ENCODE measurements at regions of chr7 and their contacts with region 1.

Region 1: DNA sequence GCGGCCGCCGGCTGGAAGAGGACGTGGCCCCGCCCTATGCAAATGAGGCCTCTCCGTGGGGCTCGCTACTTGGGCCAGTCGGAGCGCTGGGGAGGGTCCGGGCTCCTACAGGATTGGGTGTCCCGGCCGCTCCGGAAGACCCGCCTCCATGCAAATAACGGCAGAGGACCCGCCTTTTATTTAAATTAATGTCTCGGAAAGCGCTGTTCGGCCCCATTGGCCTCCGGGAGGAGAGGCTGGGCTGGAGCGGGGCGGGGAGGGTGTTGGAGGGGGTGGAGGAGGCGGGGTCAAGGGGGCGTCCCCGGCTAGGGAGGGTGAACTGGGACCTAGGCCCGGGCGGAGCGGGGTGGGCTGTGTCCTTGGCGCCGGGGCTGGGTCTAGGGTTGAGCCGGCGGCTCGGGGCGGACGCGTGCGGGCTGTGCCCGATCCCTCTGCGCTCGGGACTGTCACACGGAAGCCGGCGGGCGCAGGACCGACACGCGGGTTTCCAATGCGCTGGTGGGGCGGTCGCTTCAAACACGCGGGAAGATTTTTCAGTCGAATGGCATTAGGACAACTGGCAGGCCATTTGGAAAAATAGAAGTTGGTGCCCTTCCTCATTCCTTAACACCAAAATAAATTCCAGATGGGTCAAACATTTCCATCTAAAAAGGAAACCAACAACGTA is 344 bp upstream of the POLM start:
- DNase-seq: peak; percentile 93
- ATAC-seq: peak; percentile 90
- H3K4me3 Mint-ChIP-seq: peak overlapping the region; percentile 83
- H3K27ac Mint-ChIP-seq: peak overlapping the region; percentile 80
- H3K4me1 Mint-ChIP-seq: peaks cover 47% of the 10 kb centered on the region
- H3K27me3 Mint-ChIP-seq: no peaks in the 10 kb centered on the region
- CTCF ChIP-seq: no peak

Region 2: GRCh38 chr7:43925984-43926797 is 156.5 kb before region 1 on chr7 and contains the start of gene UBE2D4:
- CTCF ChIA-PET with region 1: no interaction called
- POLR2A ChIA-PET with region 1: no interaction called
- intact Hi-C with region 1: loop called (anchors 1 kb)
- DNase-seq: peak; percentile 89
- ATAC-seq: peak; percentile 88
- H3K4me3 Mint-ChIP-seq: peak within 1 kb of the TSS; percentile 87
- H3K27ac Mint-ChIP-seq: peak within 1 kb of the TSS; percentile 93
- H3K4me1 Mint-ChIP-seq: peaks cover 24% of the 10 kb centered on the region
- H3K27me3 Mint-ChIP-seq: no peaks in the 10 kb centered on the region
- CTCF ChIP-seq: no peak
- total RNA-seq, gene UBE2D4: 18.9 and 19.6 TPM in 2 replicates

Region 3: DNA sequence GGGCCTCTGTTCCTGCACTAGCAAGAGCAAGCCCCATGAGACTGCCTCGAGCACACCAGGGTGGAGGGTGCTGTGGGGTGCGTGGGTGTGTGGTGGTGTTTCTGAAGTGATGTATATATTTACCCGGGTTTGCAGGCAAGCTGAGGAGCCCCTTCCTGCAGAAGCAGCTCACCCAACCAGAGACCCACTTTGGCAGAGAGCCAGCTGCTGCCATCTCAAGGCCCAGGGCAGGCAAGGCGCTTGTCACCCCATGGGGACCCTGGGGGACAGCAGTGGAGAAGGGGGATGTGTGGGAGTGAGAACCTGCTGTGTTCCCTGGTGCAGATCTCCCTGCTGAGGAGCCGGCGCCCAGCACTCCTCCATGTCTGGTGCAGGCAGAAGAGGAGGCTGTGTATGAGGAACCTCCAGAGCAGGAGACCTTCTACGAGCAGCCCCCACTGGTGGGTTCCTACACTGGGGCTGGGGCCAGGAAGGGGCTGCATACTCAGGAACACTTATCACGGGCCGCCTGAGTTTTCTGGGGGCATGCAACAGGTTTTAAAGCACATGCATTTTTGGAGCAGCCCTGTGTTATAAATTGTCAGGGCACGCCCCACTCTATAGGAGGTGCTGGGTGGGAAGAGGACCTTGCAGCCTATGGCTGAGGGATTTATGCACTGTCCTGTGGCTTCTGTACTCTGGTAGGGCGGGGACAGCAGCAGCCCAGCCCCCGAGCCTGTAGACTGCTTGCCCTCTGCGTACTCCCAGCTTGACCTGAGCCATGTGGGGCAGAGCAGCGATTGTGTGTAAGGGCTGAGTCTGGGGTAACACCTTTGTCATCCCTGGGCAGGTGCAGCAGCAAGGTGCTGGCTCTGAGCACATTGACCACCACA is 23.2 kb before region 1 on chr7:
- CTCF ChIA-PET with region 1: no interaction called
- POLR2A ChIA-PET with region 1: interaction called, 9 read pairs
- intact Hi-C with region 1: loop called (anchors 1 kb)
- DNase-seq: peak; percentile 57
- ATAC-seq: peak; percentile 89
- H3K4me3 Mint-ChIP-seq: peak overlapping the region; percentile 82
- H3K27ac Mint-ChIP-seq: peak overlapping the region; percentile 98
- H3K4me1 Mint-ChIP-seq: peaks cover 74% of the 10 kb centered on the region
- H3K27me3 Mint-ChIP-seq: no peaks in the 10 kb centered on the region
- CTCF ChIP-seq: no peak

Region 4: GRCh38 chr7:44072364-44073231 is 10.1 kb before region 1 on chr7:
- CTCF ChIA-PET with region 1: interaction called, 5 read pairs
- POLR2A ChIA-PET with region 1: interaction called, 12 read pairs
- intact Hi-C with region 1: loop called (anchors 1 kb)
- DNase-seq: no peak
- ATAC-seq: peak; percentile 22
- H3K4me3 Mint-ChIP-seq: no peak overlapping the region
- H3K27ac Mint-ChIP-seq: peak overlapping the region; percentile 90
- H3K4me1 Mint-ChIP-seq: peaks cover 84% of the 10 kb centered on the region
- H3K27me3 Mint-ChIP-seq: no peaks in the 10 kb centered on the region
- CTCF ChIP-seq: no peak

Region 5: GRCh38 chr7:44103923-44104859 is 21.5 kb after region 1 on chr7 and contains the start of gene AEBP1:
- CTCF ChIA-PET with region 1: no interaction called
- POLR2A ChIA-PET with region 1: interaction called, 7 read pairs
- intact Hi-C with region 1: loop called (anchors 1 kb)
- DNase-seq: no peak
- ATAC-seq: peak; percentile 66
- H3K4me3 Mint-ChIP-seq: peak within 1 kb of the TSS; percentile 81
- H3K27ac Mint-ChIP-seq: peak within 1 kb of the TSS; percentile 72
- H3K4me1 Mint-ChIP-seq: peaks cover 57% of the 10 kb centered on the region
- H3K27me3 Mint-ChIP-seq: peaks cover 2% of the 10 kb centered on the region
- CTCF ChIP-seq: no peak
- total RNA-seq, gene AEBP1: 17.4 and 21.7 TPM in 2 replicates

Region 6: GRCh38 chr7:44145969-44146911 is 63.6 kb after region 1 on chr7:
- CTCF ChIA-PET with region 1: no interaction called
- POLR2A ChIA-PET with region 1: interaction called, 3 read pairs
- intact Hi-C with region 1: loop called (anchors 1 kb)
- DNase-seq: peak; percentile 55
- ATAC-seq: peak; percentile 85
- H3K4me3 Mint-ChIP-seq: peak overlapping the region; percentile 78
- H3K27ac Mint-ChIP-seq: no peak overlapping the region
- H3K4me1 Mint-ChIP-seq: peaks cover 18% of the 10 kb centered on the region
- H3K27me3 Mint-ChIP-seq: no peaks in the 10 kb centered on the region
- CTCF ChIP-seq: no peak

Region 7: GRCh38 chr7:44490351-44491200 is 407.9 kb after region 1 on chr7 and contains the start of gene NUDCD3:
- CTCF ChIA-PET with region 1: no interaction called
- POLR2A ChIA-PET with region 1: no interaction called
- intact Hi-C with region 1: loop called (anchors 1 kb)
- DNase-seq: peak; percentile 80
- ATAC-seq: peak; percentile 84
- H3K4me3 Mint-ChIP-seq: peak within 1 kb of the TSS; percentile 90
- H3K27ac Mint-ChIP-seq: peak within 1 kb of the TSS; percentile 97
- H3K4me1 Mint-ChIP-seq: peaks cover 46% of the 10 kb centered on the region
- H3K27me3 Mint-ChIP-seq: peaks cover 5% of the 10 kb centered on the region
- CTCF ChIP-seq: no peak
- total RNA-seq, gene NUDCD3: 80.7 and 85.1 TPM in 2 replicates

Region 8: GRCh38 chr7:44811086-44811485 is 728.4 kb after region 1 on chr7:
- CTCF ChIA-PET with region 1: no interaction called
- POLR2A ChIA-PET with region 1: no interaction called
- intact Hi-C with region 1: no loop called
- DNase-seq: no peak
- ATAC-seq: no peak
- H3K4me3 Mint-ChIP-seq: no peak overlapping the region
- H3K27ac Mint-ChIP-seq: no peak overlapping the region
- H3K4me1 Mint-ChIP-seq: no peaks in the 10 kb centered on the region
- H3K27me3 Mint-ChIP-seq: no peaks in the 10 kb centered on the region
- CTCF ChIP-seq: no peak

Measured in activated B cell treated with CpG ODN at 0.5 μM for 24 hours (primary cell).